Ascending aorta (tissue), 2 donors: ENCODE measurements at regions of chr1 and their contacts with region 1.

Region 1: GRCh38 chr1:244047621-244048471 is 3.2 kb upstream of the ZBTB18 start:
- DNase-seq: peak; percentile 97 to 99
- H3K4me3 ChIP-seq: peak overlapping the region; percentile 83 to 98
- H3K27ac ChIP-seq: peak overlapping the region; percentile 97 to 98
- H3K4me1 ChIP-seq: peaks cover 0 to 14% of the 10 kb centered on the region in 2 donors
- H3K27me3 ChIP-seq: no peaks in the 10 kb centered on the region
- CTCF ChIP-seq: no peak

Region 2: GRCh38 chr1:243255791-243256512 is 791.9 kb before region 1 on chr1 and contains the start of gene SDCCAG8:
- intact Hi-C with region 1: loop called (anchors 5 kb)
- DNase-seq: peak; percentile 98 to 100
- H3K4me3 ChIP-seq: peak within 1 kb of the TSS; percentile 84 to 99
- H3K27ac ChIP-seq: peak within 1 kb of the TSS; percentile 97 to 99
- H3K4me1 ChIP-seq: peaks cover 3 to 22% of the 10 kb centered on the region in 2 donors
- H3K27me3 ChIP-seq: no peaks in the 10 kb centered on the region
- CTCF ChIP-seq: no peak
- total RNA-seq, gene SDCCAG8: 97.1 TPM

Region 3: GRCh38 chr1:243917177-243917862 is 130.5 kb before region 1 on chr1:
- intact Hi-C with region 1: loop called (anchors 2 kb)
- DNase-seq: peak in 1 of 2 donors; percentile 67
- H3K4me3 ChIP-seq: peak overlapping the region; percentile 52 to 77
- H3K27ac ChIP-seq: peak overlapping the region in 1 of 2 donors; percentile 0
- H3K4me1 ChIP-seq: peaks cover 0 to 9% of the 10 kb centered on the region in 2 donors
- H3K27me3 ChIP-seq: no peaks in the 10 kb centered on the region
- CTCF ChIP-seq: no peak

Region 4: GRCh38 chr1:244021947-244022700 is 25.7 kb before region 1 on chr1:
- intact Hi-C with region 1: no loop called
- DNase-seq: no peak
- H3K4me3 ChIP-seq: no peak overlapping the region
- H3K27ac ChIP-seq: no peak overlapping the region
- H3K4me1 ChIP-seq: no peaks in the 10 kb centered on the region
- H3K27me3 ChIP-seq: no peaks in the 10 kb centered on the region
- CTCF ChIP-seq: no peak

Region 5: DNA sequence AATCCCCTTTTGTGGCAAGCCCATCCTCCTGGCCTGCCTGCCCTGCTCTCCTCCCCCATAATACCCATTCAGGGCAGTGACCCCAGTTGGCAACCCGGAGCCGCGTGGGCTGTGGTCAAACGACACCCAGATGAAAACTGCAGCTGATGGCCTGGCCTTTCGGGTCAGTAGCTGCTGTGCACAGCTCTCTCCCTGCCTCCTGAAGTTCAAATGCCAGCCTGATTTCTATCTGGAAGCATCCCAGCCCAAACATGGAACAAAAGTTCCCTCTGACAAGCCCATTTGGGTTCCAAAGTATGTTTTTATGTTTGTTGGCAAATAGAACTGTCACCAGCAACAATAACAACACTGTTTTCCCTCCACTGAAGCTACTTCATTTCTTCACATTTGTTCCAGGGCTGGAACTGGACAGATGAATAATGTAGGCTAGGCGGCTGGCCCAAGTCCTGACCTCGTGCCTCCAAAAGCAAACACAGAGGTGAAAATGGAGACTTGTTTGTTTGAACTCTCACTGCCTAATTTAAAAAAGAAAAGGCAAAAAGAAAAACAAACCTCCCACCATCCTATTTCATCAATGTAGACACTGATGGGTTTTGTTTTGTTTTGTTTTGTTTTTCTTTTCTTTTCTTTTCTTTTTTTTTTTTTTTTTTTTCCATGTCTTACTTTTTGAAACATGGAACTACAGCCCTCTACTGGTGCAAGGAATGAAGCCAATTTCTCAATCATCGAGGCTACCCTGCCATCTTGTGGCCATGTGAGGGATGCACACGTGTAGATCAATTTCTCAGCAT is 224.8 kb after region 1 on chr1:
- intact Hi-C with region 1: loop called (anchors 5 kb)
- DNase-seq: peak in 1 of 2 donors; percentile 81
- H3K4me3 ChIP-seq: no peak overlapping the region
- H3K27ac ChIP-seq: peak overlapping the region; percentile 3 to 54
- H3K4me1 ChIP-seq: peaks cover 0 to 3% of the 10 kb centered on the region in 2 donors
- H3K27me3 ChIP-seq: no peaks in the 10 kb centered on the region
- CTCF ChIP-seq: peak; percentile 87 to 93 (median 91)

Region 6: GRCh38 chr1:244835276-244836134 is 787.7 kb after region 1 on chr1 and contains the start of gene COX20:
- intact Hi-C with region 1: loop called (anchors 10 kb)
- DNase-seq: peak; percentile 50 to 93
- H3K4me3 ChIP-seq: peak within 1 kb of the TSS; percentile 67 to 76
- H3K27ac ChIP-seq: peak within 1 kb of the TSS; percentile 98 to 99
- H3K4me1 ChIP-seq: peaks cover 0 to 16% of the 10 kb centered on the region in 2 donors
- H3K27me3 ChIP-seq: no peaks in the 10 kb centered on the region
- CTCF ChIP-seq: no peak
- total RNA-seq, gene COX20: 8.2 TPM